ENCODE measurements at regions of chr9 and their contacts with region 1.

Region 1: GRCh38 chr9:71604197-71605063 is 163.9 kb downstream of the CEMIP2 start:
- DNase-seq: peak; percentile 93
- H3K4me3 Mint-ChIP-seq: no peak overlapping the region
- H3K27ac Mint-ChIP-seq: no peak overlapping the region
- H3K4me1 Mint-ChIP-seq: no peaks in the 10 kb centered on the region
- H3K27me3 Mint-ChIP-seq: peaks cover 17% of the 10 kb centered on the region

Region 2: DNA sequence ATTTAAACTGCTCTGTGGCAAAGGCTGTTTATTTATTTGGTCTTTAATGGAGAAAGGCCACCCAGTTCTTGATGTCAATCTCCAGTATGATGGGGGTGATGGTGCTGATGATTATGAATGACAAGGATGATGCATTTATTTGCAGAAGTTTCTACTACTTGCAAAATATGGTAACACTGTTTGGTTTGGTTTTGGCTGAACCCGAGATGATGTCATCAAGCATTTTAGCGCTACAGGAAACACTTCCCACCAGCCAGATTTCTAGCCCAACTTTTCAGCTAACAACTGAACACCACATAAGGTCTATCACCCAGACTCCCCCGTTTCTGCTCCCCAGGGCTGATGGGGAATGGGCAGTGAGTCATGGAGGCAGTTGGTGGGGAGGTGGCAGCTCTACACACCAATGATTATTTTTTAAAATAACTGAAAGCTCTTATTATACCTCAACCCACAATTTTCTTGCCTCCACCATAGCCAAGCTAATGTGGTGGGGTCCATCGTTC is 139.1 kb before region 1 on chr9:
- intact Hi-C with region 1: no loop called
- DNase-seq: no peak
- H3K4me3 Mint-ChIP-seq: no peak overlapping the region
- H3K27ac Mint-ChIP-seq: no peak overlapping the region
- H3K4me1 Mint-ChIP-seq: no peaks in the 10 kb centered on the region
- H3K27me3 Mint-ChIP-seq: no peaks in the 10 kb centered on the region

Region 3: GRCh38 chr9:71710856-71711255 is 106.4 kb after region 1 on chr9:
- intact Hi-C with region 1: loop called (anchors 5 kb)
- DNase-seq: no peak
- H3K4me3 Mint-ChIP-seq: no peak overlapping the region
- H3K27ac Mint-ChIP-seq: peak overlapping the region; percentile 31
- H3K4me1 Mint-ChIP-seq: peaks cover 21% of the 10 kb centered on the region
- H3K27me3 Mint-ChIP-seq: no peaks in the 10 kb centered on the region

Region 4: GRCh38 chr9:71819115-71819739 is 214.8 kb after region 1 on chr9:
- intact Hi-C with region 1: loop called (anchors 1 kb)
- DNase-seq: peak; percentile 77
- H3K4me3 Mint-ChIP-seq: no peak overlapping the region
- H3K27ac Mint-ChIP-seq: no peak overlapping the region
- H3K4me1 Mint-ChIP-seq: peaks cover 12% of the 10 kb centered on the region
- H3K27me3 Mint-ChIP-seq: peaks cover 2% of the 10 kb centered on the region